IMR-90 (cell line): ENCODE measurements at regions of chr10 and their contacts with region 1.

Region 1: GRCh38 chr10:100535715-100536353 is at the start of gene HIF1AN:
- DNase-seq: peak; percentile 95
- ATAC-seq: peak; percentile 100
- H3K4me3 ChIP-seq: peak within 1 kb of the TSS; percentile 68
- H3K27ac ChIP-seq: peak within 1 kb of the TSS; percentile 57; the same call in 1 of the 2 replicates
- H3K4me1 ChIP-seq: peaks cover 1% of the 10 kb centered on the region; the same call in 1 of the 2 replicates
- H3K27me3 ChIP-seq: no peaks in the 10 kb centered on the region
- CTCF ChIP-seq: peak; percentile 93
- POLR2A ChIP-seq: peak; percentile 82
- RAD21 ChIP-seq: peak; percentile 25; the same call in 1 of the 2 replicates
- total RNA-seq, gene HIF1AN: 10.2 and 10.3 TPM in 2 replicates

Region 2: GRCh38 chr10:99996671-99997625 is 538.9 kb before region 1 on chr10:
- CTCF ChIA-PET with region 1: no interaction called
- POLR2A ChIA-PET with region 1: no interaction called
- dilution Hi-C with region 1: no loop called
- in situ Hi-C with region 1: no loop called
- intact Hi-C with region 1: no loop called
- DNase-seq: peak; percentile 71
- ATAC-seq: peak; percentile 55
- H3K4me3 ChIP-seq: no peak overlapping the region
- H3K27ac ChIP-seq: peak overlapping the region; percentile 42; the same call in 1 of the 2 replicates
- H3K4me1 ChIP-seq: peaks cover 20% of the 10 kb centered on the region
- H3K27me3 ChIP-seq: no peaks in the 10 kb centered on the region
- CTCF ChIP-seq: no peak
- POLR2A ChIP-seq: no peak
- RAD21 ChIP-seq: no peak

Region 3: DNA sequence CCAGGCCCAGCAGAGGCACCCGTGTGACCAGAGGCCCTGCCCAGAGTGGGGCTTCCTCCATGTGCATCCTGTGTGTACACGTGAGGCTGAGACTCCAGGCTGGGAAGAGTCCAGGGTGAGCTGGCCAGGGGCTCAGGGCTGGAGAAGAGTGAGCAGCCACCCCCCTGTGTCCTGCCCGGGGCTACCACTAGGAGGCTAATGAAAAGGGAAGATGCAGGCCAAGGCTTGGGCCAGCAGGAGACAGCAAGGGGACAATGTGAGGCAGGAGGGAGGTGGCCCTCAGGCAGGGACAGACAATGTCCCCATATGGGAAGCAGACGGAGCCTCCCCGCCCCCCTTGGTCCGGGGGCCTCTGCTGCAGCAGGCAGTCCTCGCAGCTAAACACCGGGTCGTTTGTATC is 102.0 kb after region 1 on chr10:
- CTCF ChIA-PET with region 1: no interaction called
- POLR2A ChIA-PET with region 1: no interaction called
- dilution Hi-C with region 1: no loop called
- in situ Hi-C with region 1: no loop called
- intact Hi-C with region 1: no loop called
- DNase-seq: no peak
- ATAC-seq: no peak
- H3K4me3 ChIP-seq: no peak overlapping the region
- H3K27ac ChIP-seq: no peak overlapping the region
- H3K4me1 ChIP-seq: no peaks in the 10 kb centered on the region
- H3K27me3 ChIP-seq: peaks cover 28% of the 10 kb centered on the region
- CTCF ChIP-seq: peak; percentile 35; the same call in 1 of the 2 replicates
- POLR2A ChIP-seq: no peak
- RAD21 ChIP-seq: peak; percentile 9; the same call in 1 of the 2 replicates

Region 4: DNA sequence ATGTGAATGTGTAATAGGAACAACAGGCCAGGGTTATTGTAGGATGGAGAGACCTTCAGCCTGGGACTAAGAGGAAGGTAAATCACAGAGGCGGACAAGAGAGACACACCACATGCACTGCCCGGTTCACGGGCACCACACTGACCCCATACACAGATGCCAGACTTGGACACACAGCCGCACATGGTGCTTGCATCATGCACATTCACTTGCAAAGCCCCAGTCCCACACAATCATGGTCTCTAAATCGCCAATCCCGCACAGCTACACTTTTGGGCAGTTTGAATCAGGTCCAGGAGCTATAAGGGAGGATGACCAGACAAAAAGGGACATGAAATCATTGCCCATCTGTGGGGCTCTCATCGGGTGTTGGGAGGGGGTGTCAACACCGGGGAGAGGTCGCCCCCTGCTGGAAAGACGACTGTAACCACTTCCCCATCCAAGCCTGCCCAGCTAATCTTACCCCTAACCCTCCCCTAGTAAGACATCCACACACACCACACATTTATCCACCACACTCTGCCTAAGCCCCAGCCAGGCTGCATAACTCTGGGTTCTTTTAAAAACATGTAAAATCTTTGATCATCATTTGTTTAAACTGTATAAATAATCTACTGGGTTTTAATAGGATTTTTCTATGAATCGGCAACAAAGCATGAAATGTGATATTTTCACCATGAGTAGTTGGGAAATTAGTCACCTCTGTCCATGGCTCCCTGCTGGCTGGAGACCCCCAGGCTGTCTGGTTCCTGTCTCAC is 336.4 kb after region 1 on chr10:
- CTCF ChIA-PET with region 1: no interaction called
- POLR2A ChIA-PET with region 1: interaction called, 3 read pairs
- dilution Hi-C with region 1: no loop called
- in situ Hi-C with region 1: no loop called
- intact Hi-C with region 1: loop called (anchors 1 kb)
- DNase-seq: peak; percentile 77
- ATAC-seq: peak; percentile 93
- H3K4me3 ChIP-seq: no peak overlapping the region
- H3K27ac ChIP-seq: no peak overlapping the region
- H3K4me1 ChIP-seq: peaks cover 12% of the 10 kb centered on the region
- H3K27me3 ChIP-seq: peaks cover 12% of the 10 kb centered on the region
- CTCF ChIP-seq: peak; percentile 63
- POLR2A ChIP-seq: no peak
- RAD21 ChIP-seq: peak; percentile 65

Region 5: GRCh38 chr10:100912605-100913469 is 377.0 kb after region 1 on chr10 and contains the start of gene SLF2:
- CTCF ChIA-PET with region 1: no interaction called
- POLR2A ChIA-PET with region 1: interaction called, 10 read pairs
- dilution Hi-C with region 1: no loop called
- in situ Hi-C with region 1: no loop called
- intact Hi-C with region 1: no loop called
- DNase-seq: peak; percentile 98
- ATAC-seq: peak; percentile 93
- H3K4me3 ChIP-seq: peak within 1 kb of the TSS; percentile 87
- H3K27ac ChIP-seq: peak within 1 kb of the TSS; percentile 99
- H3K4me1 ChIP-seq: peaks cover 4% of the 10 kb centered on the region
- H3K27me3 ChIP-seq: no peaks in the 10 kb centered on the region
- CTCF ChIP-seq: no peak
- POLR2A ChIP-seq: peak; percentile 70; the same call in 1 of the 2 replicates
- RAD21 ChIP-seq: no peak
- total RNA-seq, gene SLF2: 21.7 and 28.1 TPM in 2 replicates

Region 6: GRCh38 chr10:100986952-100987750 is 451.3 kb after region 1 on chr10 and contains the starts of genes MRPL43 and TWNK:
- CTCF ChIA-PET with region 1: no interaction called
- POLR2A ChIA-PET with region 1: no interaction called
- dilution Hi-C with region 1: no loop called
- in situ Hi-C with region 1: no loop called
- intact Hi-C with region 1: no loop called
- DNase-seq: peak; percentile 64
- ATAC-seq: peak; percentile 94
- H3K4me3 ChIP-seq: peak within 1 kb of the TSS; percentile 90
- H3K27ac ChIP-seq: peak within 1 kb of the TSS; percentile 98
- H3K4me1 ChIP-seq: peaks cover 8% of the 10 kb centered on the region; the same call in 1 of the 2 replicates
- H3K27me3 ChIP-seq: no peaks in the 10 kb centered on the region
- CTCF ChIP-seq: no peak
- POLR2A ChIP-seq: no peak; the same call in 1 of the 2 replicates
- RAD21 ChIP-seq: no peak
- total RNA-seq, gene MRPL43: 56.4 and 61.3 TPM in 2 replicates
- total RNA-seq, gene TWNK: 8.8 and 8.9 TPM in 2 replicates